ENCODE measurements at regions of chr11 and their contacts with region 1.

Region 1: GRCh38 chr11:15074206-15075161 is 1.1 kb downstream of the CALCB start:
- DNase-seq: peak; percentile 89
- ATAC-seq: peak; percentile 94 to 95

Region 2: DNA sequence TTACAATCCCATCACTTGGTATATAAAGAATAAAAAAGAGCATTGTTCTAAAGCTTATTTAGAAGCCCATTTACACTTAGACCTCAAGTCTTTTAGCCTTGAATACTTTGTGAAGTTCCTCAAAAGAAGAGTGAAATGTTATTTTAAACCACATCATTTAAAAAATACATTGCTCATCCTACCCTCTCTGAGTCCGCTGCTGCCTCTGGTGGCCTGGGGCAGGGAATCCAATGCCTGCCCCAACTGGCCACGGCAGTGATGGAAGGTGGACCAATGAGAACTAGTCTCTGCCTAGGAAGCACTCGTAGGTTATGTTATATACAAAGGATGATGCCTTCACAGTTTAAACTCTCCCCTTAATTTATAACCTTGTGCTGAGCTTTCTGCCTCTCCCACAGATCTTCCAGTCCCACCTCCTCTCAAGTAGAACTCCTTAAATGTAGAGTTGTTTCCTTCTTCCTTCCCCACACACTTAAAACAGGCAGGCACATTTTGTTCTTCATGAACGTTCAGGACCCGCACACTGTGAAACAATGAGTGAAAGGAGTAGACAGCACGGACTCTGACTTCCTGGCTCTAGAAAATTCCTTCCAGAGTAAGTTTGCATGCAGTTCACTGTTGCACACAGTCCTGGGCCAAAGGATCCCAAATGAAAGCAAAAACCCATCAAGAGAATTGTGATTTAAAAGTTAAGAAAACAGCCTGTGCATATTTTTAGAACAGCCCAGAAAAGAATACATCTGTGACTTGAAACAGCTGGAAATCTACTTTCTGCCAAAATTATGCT is 883.3 kb before region 1 on chr11:
- intact Hi-C with region 1: no loop called
- DNase-seq: no peak
- ATAC-seq: peak; percentile 47 to 74

Region 3: DNA sequence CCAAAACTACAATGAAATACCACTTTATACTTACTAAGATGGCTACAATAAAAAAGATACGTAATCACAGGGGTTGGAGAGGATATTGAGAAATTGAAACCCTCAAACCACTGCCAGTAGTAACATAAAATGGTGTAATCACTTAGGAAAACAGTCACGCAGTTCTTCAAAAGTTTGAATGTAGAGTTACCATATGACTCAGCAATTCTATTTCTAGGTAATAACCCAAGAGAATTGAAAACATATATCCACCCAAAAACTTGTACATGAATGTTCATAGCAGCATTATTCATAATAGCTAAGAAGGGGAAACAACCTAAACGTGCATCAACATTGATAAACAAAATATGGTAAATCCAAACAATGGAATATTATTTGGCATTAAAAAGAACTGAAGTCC is 529.9 kb before region 1 on chr11:
- intact Hi-C with region 1: loop called in 1 of 2 experiments (anchors 10 kb)
- DNase-seq: no peak
- ATAC-seq: no peak

Region 4: GRCh38 chr11:14789879-14790484 is 284.5 kb before region 1 on chr11:
- intact Hi-C with region 1: loop called in 1 of 2 experiments (anchors 5 kb)
- DNase-seq: no peak
- ATAC-seq: no peak

Region 5: GRCh38 chr11:14974515-14975251 is 99.8 kb before region 1 on chr11:
- intact Hi-C with region 1: loop called in 1 of 2 experiments (anchors 10 kb)
- DNase-seq: peak; percentile 51
- ATAC-seq: peak; percentile 64 to 76

Region 6: DNA sequence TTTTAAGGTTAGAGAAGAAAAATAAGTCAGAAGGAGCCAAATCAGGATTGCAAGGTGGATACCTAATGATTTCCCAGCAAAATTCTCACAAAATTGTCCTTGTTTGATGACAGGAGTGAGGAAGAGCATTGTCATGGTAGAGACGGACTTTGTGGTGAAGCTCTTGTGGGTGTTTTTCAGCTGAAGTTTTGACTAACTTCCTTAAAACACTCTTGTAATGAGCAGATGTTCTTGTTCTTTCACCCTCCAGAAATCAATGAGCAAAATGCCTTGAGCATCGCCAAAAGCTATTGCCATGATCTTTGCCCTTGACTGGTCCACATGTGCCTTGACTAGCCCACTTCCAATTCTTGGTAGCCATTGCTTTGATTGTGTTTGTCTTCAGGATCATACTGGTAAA is 18.9 kb after region 1 on chr11:
- intact Hi-C with region 1: no loop called
- DNase-seq: no peak
- ATAC-seq: no peak